B cell (primary cell): ENCODE measurements at regions of chr12 and their contacts with region 1.

Region 1: DNA sequence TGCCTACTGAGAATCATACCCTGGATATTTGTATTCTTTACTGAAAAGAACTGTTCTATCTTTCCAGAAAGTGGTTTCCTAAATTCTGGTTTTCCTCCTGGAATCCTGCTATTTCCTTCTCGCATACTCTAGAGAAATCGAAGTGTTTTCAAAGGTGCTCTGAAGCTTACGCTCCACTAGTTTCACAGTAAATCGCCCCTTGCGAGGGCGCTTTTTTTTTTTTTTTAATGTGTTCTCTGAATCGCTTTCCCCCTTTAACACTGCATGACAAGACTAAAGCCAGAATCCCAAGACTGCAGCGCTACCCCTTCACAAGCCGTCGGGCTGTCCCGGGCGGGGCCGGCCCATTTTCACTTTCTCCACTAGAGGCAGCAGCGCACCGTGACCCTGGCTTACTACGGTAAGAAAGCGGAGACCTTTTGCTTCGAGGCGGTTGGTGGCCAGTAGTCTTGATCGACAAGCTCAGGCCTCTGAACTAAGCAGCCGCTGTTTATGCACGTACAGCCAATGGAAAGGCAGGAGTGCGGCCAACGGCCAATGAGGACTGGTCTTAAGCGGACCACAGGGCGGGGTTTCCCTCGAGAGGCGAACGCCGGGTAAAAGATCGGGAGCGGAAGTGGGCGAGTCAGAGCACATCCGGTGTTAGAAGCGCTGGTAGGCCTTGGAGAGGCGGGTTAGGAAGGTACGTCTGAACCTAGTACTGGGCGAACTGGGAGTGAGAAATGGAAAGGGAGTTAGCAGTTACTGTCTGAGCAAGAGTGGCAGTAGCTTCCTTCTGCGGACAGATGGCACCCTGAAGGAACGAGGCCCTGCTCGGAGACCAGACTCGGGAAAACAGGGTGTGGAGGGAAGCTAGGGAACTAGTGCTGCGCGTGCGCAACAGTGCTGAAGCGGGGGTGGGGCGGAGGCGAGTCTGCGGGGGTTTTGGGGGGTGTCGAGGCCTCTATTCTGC is at the start of gene TMBIM6:
- DNase-seq: peak; percentile 99
- ATAC-seq: peak; percentile 93
- H3K4me3 ChIP-seq: peak within 1 kb of the TSS; percentile 66 to 97 (median 87)
- H3K4me3 Mint-ChIP-seq: peak within 1 kb of the TSS; percentile 91
- H3K27ac ChIP-seq: peak within 1 kb of the TSS; percentile 97 to 99
- H3K27ac Mint-ChIP-seq: peak within 1 kb of the TSS; percentile 95
- H3K4me1 ChIP-seq: peaks cover 30 to 34% of the 10 kb centered on the region in 2 donors
- H3K4me1 Mint-ChIP-seq: peaks cover 43% of the 10 kb centered on the region
- H3K27me3 ChIP-seq: no peaks in the 10 kb centered on the region
- H3K27me3 Mint-ChIP-seq: no peaks in the 10 kb centered on the region
- CTCF ChIP-seq: peak; percentile 97
- total RNA-seq, gene TMBIM6: 335 and 336 TPM in 2 replicates

Region 2: DNA sequence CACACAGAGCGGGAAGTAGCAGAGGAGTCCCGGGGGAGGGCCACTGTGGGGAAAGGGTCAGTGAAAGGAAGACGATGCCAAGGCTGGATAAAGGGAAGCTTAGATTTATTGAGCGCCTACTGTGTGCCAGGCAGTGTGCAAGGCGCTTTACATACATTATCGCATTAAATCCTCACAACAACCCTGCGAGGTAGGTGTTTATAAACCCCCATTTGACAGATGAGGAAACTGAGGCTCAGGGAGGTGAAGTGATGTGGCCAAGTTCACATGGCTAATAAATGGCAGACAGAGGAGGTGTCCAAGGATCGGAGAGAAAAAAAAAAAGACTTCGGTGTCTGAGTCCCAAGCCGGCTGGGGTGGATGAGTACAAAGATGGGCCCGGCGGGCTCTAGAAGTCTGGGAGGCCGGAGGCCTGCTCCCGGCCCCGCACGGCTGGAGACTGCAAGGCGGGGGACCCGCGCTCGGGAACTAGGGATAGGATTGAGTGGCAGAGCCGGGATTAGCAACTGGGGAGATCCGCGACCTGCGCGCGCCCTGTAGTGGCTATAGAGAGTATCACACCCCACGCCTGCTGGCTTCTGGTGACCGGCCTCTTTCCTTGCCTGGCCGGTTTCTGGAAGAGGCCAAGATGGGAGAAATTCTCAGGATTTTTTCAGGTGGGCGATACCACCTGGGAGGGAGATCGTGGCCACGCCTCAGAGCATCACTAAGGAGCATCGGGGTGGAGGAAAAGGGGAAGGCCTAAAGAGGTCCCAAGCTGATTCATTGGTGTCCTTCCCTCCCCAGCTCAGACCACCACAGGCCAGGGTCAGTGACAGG is 745.9 kb before region 1 on chr12:
- CTCF ChIA-PET with region 1: no interaction called
- POLR2A ChIA-PET with region 1: no interaction called
- intact Hi-C with region 1: loop called (anchors 5 kb)
- DNase-seq: peak; percentile 72
- ATAC-seq: peak; percentile 26
- H3K4me3 ChIP-seq: peak overlapping the region in 1 of 5 experiments; percentile 23
- H3K4me3 Mint-ChIP-seq: peak overlapping the region; percentile 59
- H3K27ac ChIP-seq: no peak overlapping the region
- H3K27ac Mint-ChIP-seq: no peak overlapping the region
- H3K4me1 ChIP-seq: peaks cover 37 to 44% of the 10 kb centered on the region in 2 donors
- H3K4me1 Mint-ChIP-seq: peaks cover 40% of the 10 kb centered on the region
- H3K27me3 ChIP-seq: peaks cover 0 to 72% (median 33%) of the 10 kb centered on the region in 4 experiments
- H3K27me3 Mint-ChIP-seq: peaks cover 32% of the 10 kb centered on the region
- CTCF ChIP-seq: peak; percentile 86

Region 3: GRCh38 chr12:49489720-49490119 is 251.5 kb before region 1 on chr12:
- CTCF ChIA-PET with region 1: no interaction called
- POLR2A ChIA-PET with region 1: no interaction called
- intact Hi-C with region 1: no loop called
- DNase-seq: no peak
- ATAC-seq: no peak
- H3K4me3 ChIP-seq: no peak overlapping the region
- H3K4me3 Mint-ChIP-seq: no peak overlapping the region
- H3K27ac ChIP-seq: no peak overlapping the region
- H3K27ac Mint-ChIP-seq: no peak overlapping the region
- H3K4me1 ChIP-seq: no peaks in the 10 kb centered on the region
- H3K4me1 Mint-ChIP-seq: no peaks in the 10 kb centered on the region
- H3K27me3 ChIP-seq: no peaks in the 10 kb centered on the region
- H3K27me3 Mint-ChIP-seq: no peaks in the 10 kb centered on the region
- CTCF ChIP-seq: no peak

Region 4: GRCh38 chr12:49538510-49539403 is 202.4 kb before region 1 on chr12 and contains the start of gene KCNH3:
- CTCF ChIA-PET with region 1: no interaction called
- POLR2A ChIA-PET with region 1: no interaction called
- intact Hi-C with region 1: no loop called
- DNase-seq: peak; percentile 90
- ATAC-seq: peak; percentile 82
- H3K4me3 ChIP-seq: peak within 1 kb of the TSS; percentile 40 to 76 (median 48)
- H3K4me3 Mint-ChIP-seq: peak within 1 kb of the TSS; percentile 82
- H3K27ac ChIP-seq: no peak within 1 kb of the TSS
- H3K27ac Mint-ChIP-seq: no peak within 1 kb of the TSS
- H3K4me1 ChIP-seq: peaks cover 33 to 49% of the 10 kb centered on the region in 2 donors
- H3K4me1 Mint-ChIP-seq: peaks cover 44% of the 10 kb centered on the region
- H3K27me3 ChIP-seq: peaks cover 0 to 42% (median 13%) of the 10 kb centered on the region in 4 experiments
- H3K27me3 Mint-ChIP-seq: peaks cover 31% of the 10 kb centered on the region
- CTCF ChIP-seq: no peak
- total RNA-seq, gene KCNH3: 0.19 and 0.54 TPM in 2 replicates

Region 5: DNA sequence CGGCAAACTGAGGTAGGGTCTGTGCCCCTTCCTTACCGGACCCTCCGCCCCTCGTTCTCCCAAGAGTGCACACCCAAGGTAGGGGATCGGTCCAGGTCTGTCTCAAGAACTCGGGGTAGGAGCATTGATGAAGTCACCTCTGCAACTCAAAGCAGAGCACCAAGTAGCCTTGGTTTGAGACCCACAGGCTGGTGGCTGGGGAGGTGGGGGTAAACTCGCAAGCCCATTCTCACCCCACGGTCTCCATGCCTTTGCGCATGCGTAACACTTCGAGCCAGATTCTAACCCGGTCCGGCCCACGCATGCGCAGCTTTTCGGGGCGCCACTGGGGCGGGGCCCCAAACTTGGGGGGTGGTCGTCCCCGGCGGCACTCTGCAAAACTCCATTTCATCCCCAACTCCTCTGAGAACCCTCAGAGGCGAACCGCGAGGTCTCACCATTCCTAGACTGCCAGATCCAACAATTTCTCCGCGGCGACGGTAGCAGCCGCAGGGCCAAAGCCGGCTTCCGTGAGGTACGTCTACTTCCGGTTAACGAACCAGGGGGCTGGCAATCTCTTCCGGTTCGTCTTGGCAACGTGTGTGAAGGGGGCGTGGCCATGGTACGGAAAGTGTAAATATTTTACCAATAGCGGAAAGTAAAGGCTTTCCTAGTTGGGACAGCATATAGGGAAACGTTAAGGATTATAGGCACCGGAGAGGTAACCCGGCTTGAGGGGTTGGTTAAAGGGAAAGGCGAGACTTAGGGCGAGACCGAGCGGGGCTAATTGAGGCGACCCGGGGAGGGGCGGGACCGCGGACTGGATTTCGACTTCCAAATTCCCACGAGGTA is 173.4 kb before region 1 on chr12 and contains the start of gene MCRS1:
- CTCF ChIA-PET with region 1: no interaction called
- POLR2A ChIA-PET with region 1: no interaction called
- intact Hi-C with region 1: loop called (anchors 1 kb)
- DNase-seq: peak; percentile 96
- ATAC-seq: peak; percentile 92
- H3K4me3 ChIP-seq: peak within 1 kb of the TSS; percentile 62 to 98 (median 91)
- H3K4me3 Mint-ChIP-seq: peak within 1 kb of the TSS; percentile 99
- H3K27ac ChIP-seq: peak within 1 kb of the TSS; percentile 91 to 97
- H3K27ac Mint-ChIP-seq: peak within 1 kb of the TSS; percentile 99
- H3K4me1 ChIP-seq: peaks cover 15 to 29% of the 10 kb centered on the region in 2 donors
- H3K4me1 Mint-ChIP-seq: peaks cover 28% of the 10 kb centered on the region
- H3K27me3 ChIP-seq: no peaks in the 10 kb centered on the region
- H3K27me3 Mint-ChIP-seq: no peaks in the 10 kb centered on the region
- CTCF ChIP-seq: no peak
- total RNA-seq, gene MCRS1: 81.1 and 84.3 TPM in 2 replicates

Region 6: GRCh38 chr12:49636979-49637755 is 104.0 kb before region 1 on chr12:
- CTCF ChIA-PET with region 1: interaction called, 20 read pairs
- POLR2A ChIA-PET with region 1: no interaction called
- intact Hi-C with region 1: no loop called
- DNase-seq: peak; percentile 67
- ATAC-seq: peak; percentile 92
- H3K4me3 ChIP-seq: no peak overlapping the region
- H3K4me3 Mint-ChIP-seq: no peak overlapping the region
- H3K27ac ChIP-seq: no peak overlapping the region
- H3K27ac Mint-ChIP-seq: peak overlapping the region; percentile 67
- H3K4me1 ChIP-seq: peaks cover 13 to 18% of the 10 kb centered on the region in 2 donors
- H3K4me1 Mint-ChIP-seq: peaks cover 21% of the 10 kb centered on the region
- H3K27me3 ChIP-seq: no peaks in the 10 kb centered on the region
- H3K27me3 Mint-ChIP-seq: no peaks in the 10 kb centered on the region
- CTCF ChIP-seq: peak; percentile 77

Region 7: DNA sequence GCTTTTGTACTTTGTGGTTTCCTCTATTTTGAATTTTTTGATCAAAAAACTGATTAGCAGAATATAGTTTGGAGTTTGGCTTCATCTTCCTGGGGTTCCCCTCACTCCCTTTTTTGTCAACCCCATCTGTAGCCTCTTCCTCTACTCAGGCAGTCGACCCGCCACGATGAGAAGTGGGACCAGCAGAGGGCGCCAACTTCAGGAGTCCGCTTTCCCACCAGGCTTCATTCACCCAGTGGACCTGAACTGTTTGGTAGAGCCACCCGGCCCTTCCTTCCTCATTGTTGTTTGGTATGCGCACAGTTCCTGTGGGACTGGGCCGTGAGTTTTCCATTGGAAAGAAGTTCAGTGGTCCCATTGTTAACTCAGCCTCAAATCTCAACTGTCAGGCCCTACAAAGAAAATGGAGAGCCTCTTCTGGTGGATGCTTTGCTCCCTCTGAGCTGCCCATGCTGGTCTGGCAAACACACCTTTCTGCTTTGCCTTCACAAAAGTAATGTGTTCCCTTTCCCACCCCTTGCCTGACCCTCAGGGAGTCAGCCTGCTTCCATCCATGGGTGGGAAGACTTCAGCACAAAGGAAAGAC is 21.9 kb after region 1 on chr12:
- CTCF ChIA-PET with region 1: interaction called, 58 read pairs
- POLR2A ChIA-PET with region 1: interaction called, 9 read pairs
- intact Hi-C with region 1: loop called (anchors 1 kb)
- DNase-seq: peak; percentile 81
- ATAC-seq: peak; percentile 85
- H3K4me3 ChIP-seq: no peak overlapping the region
- H3K4me3 Mint-ChIP-seq: no peak overlapping the region
- H3K27ac ChIP-seq: peak overlapping the region in 1 of 2 donors; percentile 50
- H3K27ac Mint-ChIP-seq: peak overlapping the region; percentile 26
- H3K4me1 ChIP-seq: peaks cover 12 to 14% of the 10 kb centered on the region in 2 donors
- H3K4me1 Mint-ChIP-seq: peaks cover 22% of the 10 kb centered on the region
- H3K27me3 ChIP-seq: no peaks in the 10 kb centered on the region
- H3K27me3 Mint-ChIP-seq: no peaks in the 10 kb centered on the region
- CTCF ChIP-seq: peak; percentile 89

Region 8: DNA sequence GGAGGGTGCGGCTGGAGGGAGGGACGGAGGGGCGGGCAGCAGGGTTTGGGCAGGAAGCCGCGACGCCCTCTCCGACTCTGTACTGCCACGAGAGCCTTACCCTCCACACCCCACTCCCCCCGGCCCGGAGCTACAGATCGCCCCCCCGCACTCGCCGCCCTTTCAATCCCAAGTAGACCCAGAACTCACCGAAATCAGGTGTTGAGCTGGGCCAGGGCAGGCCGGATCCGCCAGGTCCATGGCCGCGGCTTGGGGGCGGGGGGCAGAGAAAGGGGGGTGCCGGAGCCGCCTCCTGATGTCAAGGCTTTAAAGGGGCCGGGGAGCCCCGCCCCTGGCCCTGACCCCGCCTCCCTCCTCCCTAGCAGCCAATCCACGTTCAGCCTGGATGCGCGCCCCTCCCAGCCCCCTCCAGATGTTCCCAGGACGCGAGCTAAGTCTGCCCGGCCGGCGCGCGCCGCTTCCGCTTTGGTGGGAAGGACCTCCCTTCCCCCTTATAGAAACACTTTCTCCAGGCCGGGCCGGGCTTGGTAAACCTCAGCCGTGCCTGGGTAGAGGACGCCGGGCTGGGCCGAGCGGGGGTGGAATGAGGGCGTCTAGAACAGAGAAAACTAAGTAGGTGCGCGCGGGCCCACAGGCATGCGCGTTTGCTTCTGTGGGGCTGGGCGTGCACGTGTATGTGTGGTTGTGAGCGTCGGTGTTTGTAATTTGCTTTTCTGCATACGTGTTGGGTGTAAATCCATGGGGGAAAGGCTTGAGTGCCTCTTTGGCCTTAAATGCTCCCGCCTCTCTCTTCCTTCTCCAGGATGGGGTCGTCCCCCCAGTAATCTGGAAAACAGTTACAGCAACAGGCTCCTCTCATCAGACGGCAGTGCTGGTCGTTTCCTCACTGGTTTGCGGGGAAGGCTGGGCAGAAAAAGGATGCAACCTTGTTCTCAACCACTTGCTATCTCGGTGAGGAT is 87.2 kb after region 1 on chr12 and contains the start of gene NCKAP5L:
- CTCF ChIA-PET with region 1: interaction called, 5 read pairs
- POLR2A ChIA-PET with region 1: interaction called, 8 read pairs
- intact Hi-C with region 1: loop called (anchors 1 kb)
- DNase-seq: peak; percentile 96
- ATAC-seq: peak; percentile 98
- H3K4me3 ChIP-seq: peak within 1 kb of the TSS; percentile 60 to 84 (median 73)
- H3K4me3 Mint-ChIP-seq: peak within 1 kb of the TSS; percentile 99
- H3K27ac ChIP-seq: peak within 1 kb of the TSS; percentile 36 to 75
- H3K27ac Mint-ChIP-seq: peak within 1 kb of the TSS; percentile 97
- H3K4me1 ChIP-seq: peaks cover 26% of the 10 kb centered on the region in 2 donors
- H3K4me1 Mint-ChIP-seq: peaks cover 39% of the 10 kb centered on the region
- H3K27me3 ChIP-seq: no peaks in the 10 kb centered on the region
- H3K27me3 Mint-ChIP-seq: no peaks in the 10 kb centered on the region
- CTCF ChIP-seq: no peak
- total RNA-seq, gene NCKAP5L: 13.2 and 13.4 TPM in 2 replicates

Region 9: DNA sequence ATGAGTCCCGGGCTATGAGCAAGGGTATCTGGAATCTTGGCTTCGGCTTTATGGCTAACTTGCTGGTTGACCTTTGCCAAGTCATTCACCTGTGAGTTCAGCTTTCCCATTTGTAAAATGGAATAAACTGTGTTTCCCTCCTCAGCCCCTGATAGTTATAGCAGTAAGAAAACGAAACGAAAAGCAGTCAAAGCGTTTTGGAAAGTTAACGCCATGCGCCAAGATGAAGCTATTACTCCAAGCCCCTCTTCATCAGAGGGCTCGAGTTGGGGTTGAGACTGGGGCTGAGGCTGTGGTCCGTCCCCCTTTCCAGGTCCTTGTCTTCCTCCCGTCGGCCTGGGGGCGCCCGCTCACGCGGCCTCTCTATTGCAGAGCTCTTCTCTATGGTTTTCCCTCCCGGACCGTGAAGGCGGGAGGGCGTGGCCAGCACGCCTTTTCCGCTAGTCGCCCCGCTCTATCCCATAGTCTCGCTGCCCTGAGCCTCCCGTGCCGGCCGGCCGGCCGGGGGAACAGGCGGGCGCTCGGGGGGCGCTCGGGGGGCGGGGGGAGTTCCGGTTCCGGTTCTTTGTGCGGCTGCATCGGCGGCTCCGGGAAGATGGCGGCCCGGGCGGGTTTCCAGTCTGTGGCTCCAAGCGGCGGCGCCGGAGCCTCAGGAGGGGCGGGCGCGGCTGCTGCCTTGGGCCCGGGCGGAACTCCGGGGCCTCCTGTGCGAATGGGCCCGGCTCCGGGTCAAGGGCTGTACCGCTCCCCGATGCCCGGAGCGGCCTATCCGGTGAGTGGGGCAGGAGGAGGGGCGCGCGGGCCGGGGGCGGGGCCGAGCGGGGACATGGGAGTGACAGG is 343.8 kb after region 1 on chr12 and contains the start of gene SMARCD1:
- CTCF ChIA-PET with region 1: no interaction called
- POLR2A ChIA-PET with region 1: interaction called, 3 read pairs
- intact Hi-C with region 1: loop called (anchors 1 kb)
- DNase-seq: peak; percentile 92
- ATAC-seq: peak; percentile 84
- H3K4me3 ChIP-seq: peak within 1 kb of the TSS; percentile 64 to 97 (median 81)
- H3K4me3 Mint-ChIP-seq: peak within 1 kb of the TSS; percentile 97
- H3K27ac ChIP-seq: peak within 1 kb of the TSS; percentile 87 to 92
- H3K27ac Mint-ChIP-seq: peak within 1 kb of the TSS; percentile 99
- H3K4me1 ChIP-seq: peaks cover 13 to 20% of the 10 kb centered on the region in 2 donors
- H3K4me1 Mint-ChIP-seq: peaks cover 41% of the 10 kb centered on the region
- H3K27me3 ChIP-seq: no peaks in the 10 kb centered on the region
- H3K27me3 Mint-ChIP-seq: no peaks in the 10 kb centered on the region
- CTCF ChIP-seq: no peak
- total RNA-seq, gene SMARCD1: 101 and 104 TPM in 2 replicates